Ovary (tissue), 10 donors: ENCODE measurements at regions of chr16 and their contacts with region 1.

Region 1: DNA sequence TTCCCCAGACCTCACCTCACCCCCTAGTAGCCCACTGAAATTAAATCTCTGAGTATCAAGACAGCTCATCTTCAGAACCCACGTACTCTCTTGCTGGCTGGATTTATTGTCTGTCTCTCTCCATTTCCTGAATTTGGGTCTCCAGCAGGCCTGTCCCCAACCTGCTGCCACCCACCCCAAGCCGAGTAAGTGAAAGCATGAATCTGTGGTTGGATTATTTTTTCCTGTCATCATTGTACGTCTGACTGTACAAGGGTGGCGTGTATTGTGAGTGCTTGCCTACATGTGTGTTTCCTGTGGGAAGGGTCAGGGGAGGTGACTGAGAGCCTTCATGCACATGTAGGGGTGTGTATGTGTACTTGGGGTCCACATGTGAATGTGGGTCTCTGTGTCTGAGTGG is 5.4 kb downstream of the TNP2 start:
- DNase-seq: no peak
- H3K4me3 ChIP-seq: no peak overlapping the region
- H3K27ac ChIP-seq: no peak overlapping the region
- H3K4me1 ChIP-seq: no peaks in the 10 kb centered on the region
- H3K27me3 ChIP-seq: no peaks in the 10 kb centered on the region
- CTCF ChIP-seq: no peak
- EP300 ChIP-seq: no peak
- POLR2A ChIP-seq: no peak

Region 2: GRCh38 chr16:11319529-11320146 is 55.9 kb after region 1 on chr16:
- intact Hi-C with region 1: loop called in 2 of 4 experiments (anchors 5 kb)
- DNase-seq: no peak
- H3K4me3 ChIP-seq: no peak overlapping the region
- H3K27ac ChIP-seq: no peak overlapping the region
- H3K4me1 ChIP-seq: peaks cover 2% of the 10 kb centered on the region
- H3K27me3 ChIP-seq: no peaks in the 10 kb centered on the region
- CTCF ChIP-seq: no peak
- EP300 ChIP-seq: no peak
- POLR2A ChIP-seq: no peak

Region 3: GRCh38 chr16:11535471-11535870 is 271.7 kb after region 1 on chr16:
- intact Hi-C with region 1: no loop called
- DNase-seq: no peak
- H3K4me3 ChIP-seq: no peak overlapping the region
- H3K27ac ChIP-seq: no peak overlapping the region
- H3K4me1 ChIP-seq: no peaks in the 10 kb centered on the region
- H3K27me3 ChIP-seq: no peaks in the 10 kb centered on the region
- CTCF ChIP-seq: no peak
- EP300 ChIP-seq: no peak
- POLR2A ChIP-seq: no peak